ENCODE measurements at regions of chr3 and their contacts with region 1.

Region 1: DNA sequence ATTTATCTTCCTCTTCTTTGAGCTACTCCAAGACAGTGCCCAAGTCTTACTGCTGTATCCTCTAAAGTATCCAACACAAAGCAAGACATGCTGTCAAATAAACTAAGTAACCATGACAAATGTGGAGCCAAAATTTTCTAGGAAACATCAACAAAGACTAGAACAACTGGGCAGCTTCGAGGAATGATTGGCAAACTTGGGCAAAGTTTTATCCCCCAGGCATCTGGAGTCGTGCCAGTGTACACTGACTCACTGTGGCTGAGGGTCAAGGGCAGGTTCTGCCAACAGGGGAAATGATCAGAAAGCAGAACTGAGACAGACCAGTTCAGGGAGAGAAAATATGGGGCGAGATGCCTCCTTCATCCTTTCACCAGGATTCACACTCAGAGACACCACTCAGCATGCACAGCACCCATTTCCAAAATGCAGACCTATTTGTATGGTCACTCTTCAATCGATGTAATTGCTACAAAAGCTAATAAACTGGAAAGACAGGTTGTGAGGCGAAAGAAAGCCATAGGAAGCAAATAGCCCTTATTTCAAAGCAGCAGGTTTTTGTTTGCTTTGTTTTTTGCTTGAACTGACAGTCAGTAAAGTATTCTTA is 65.7 kb downstream of the MB21D2 start:
- DNase-seq: peak; percentile 99
- ATAC-seq: peak; percentile 62
- H3K4me3 ChIP-seq: peak overlapping the region; percentile 27; the same call in 1 of the 2 replicates
- H3K27ac ChIP-seq: peak overlapping the region; percentile 75
- H3K4me1 ChIP-seq: peaks cover 54% of the 10 kb centered on the region
- H3K27me3 ChIP-seq: no peaks in the 10 kb centered on the region
- CTCF ChIP-seq: no peak

Region 2: DNA sequence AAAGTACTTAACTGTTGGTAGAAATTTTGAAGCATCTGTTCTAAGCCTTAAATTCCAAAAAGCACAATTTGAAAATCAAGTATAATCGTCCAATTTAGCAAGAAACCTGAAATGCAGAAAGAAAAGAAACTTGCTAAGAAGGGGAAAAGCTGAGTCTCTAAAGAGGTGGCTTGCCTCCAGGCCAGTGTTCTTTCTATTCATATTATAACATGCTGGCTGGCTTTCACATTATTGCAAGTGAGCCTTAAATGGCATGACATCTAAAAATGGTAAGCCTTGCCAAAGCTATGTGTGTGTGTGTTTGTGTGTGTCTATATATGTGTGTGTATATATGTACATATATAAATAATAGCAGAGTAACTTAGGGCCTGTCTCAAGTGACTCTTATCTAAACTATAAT is 214.1 kb before region 1 on chr3:
- CTCF ChIA-PET with region 1: no interaction called
- POLR2A ChIA-PET with region 1: no interaction called
- intact Hi-C with region 1: no loop called
- DNase-seq: no peak
- ATAC-seq: no peak
- H3K4me3 ChIP-seq: no peak overlapping the region
- H3K27ac ChIP-seq: no peak overlapping the region
- H3K4me1 ChIP-seq: no peaks in the 10 kb centered on the region
- H3K27me3 ChIP-seq: peaks cover 75% of the 10 kb centered on the region
- CTCF ChIP-seq: no peak

Region 3: DNA sequence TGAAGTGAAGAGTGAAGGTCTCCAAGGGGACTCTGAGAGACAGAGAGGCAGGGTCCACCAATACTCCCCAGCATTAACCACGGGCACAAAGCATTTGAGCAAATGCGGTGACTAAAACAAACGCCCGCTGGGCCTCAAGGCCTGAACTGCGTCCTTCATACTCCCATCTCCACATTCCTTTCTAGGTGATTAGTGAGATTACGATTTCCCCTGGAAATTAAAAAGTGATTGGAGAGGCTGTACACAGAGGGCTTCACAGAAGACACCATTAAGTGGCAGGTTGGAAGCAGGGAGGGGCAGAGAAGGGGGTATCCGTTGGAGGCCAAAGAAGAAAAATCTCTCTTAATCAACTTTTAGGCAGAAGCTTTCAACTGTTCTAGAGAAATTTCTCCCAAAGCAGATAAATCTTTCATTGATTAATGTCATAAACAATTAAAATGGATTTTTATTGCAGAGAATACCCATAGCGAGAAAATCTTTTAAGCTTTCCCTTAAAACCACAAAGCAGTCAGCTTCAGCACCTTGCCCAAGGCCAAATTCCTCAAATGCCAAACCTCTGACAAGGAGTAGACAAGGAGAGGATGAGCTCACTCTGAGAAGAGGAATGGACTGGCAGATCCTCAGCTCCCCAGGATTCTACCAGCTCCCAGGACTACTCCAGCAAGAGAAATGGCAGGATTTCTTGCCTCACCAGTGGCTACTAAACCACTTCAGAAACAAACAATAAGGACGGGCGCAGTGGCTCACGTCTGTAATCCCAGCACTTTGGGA is 27.6 kb after region 1 on chr3:
- CTCF ChIA-PET with region 1: no interaction called
- POLR2A ChIA-PET with region 1: no interaction called
- intact Hi-C with region 1: loop called (anchors 1 kb)
- DNase-seq: peak; percentile 99
- ATAC-seq: peak; percentile 86
- H3K4me3 ChIP-seq: peak overlapping the region; percentile 54
- H3K27ac ChIP-seq: no peak overlapping the region
- H3K4me1 ChIP-seq: peaks cover 68% of the 10 kb centered on the region
- H3K27me3 ChIP-seq: no peaks in the 10 kb centered on the region
- CTCF ChIP-seq: no peak

Region 4: DNA sequence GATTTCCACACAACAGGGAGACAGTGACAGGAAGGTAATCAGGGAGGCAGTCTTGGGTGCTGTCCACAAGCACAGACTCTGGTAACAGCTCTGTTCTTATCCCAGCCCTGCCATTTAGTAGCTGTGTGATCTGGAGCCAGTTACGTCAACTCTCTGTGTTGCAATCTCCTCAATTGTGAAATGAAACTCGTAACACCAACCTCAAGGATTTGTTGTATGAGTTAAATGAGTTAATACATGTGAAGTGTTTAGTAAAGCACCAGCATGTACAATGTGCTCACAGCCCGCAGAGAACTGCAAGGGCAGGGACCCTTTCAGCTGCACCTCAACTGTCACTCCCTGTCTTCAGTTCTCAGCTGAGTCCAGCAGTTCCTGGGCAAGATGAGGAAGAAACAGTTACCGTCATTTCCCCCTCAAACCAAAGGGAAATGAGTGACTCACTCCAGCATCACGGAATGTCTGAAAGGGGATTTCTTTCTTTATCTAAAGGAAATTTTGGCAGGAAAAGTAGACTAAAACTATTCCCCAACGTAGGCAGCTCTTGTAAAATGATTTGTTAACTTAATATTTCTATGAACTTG is 105.6 kb after region 1 on chr3:
- CTCF ChIA-PET with region 1: no interaction called
- POLR2A ChIA-PET with region 1: no interaction called
- intact Hi-C with region 1: no loop called
- DNase-seq: peak; percentile 74
- ATAC-seq: peak; percentile 92
- H3K4me3 ChIP-seq: no peak overlapping the region
- H3K27ac ChIP-seq: peak overlapping the region; percentile 34
- H3K4me1 ChIP-seq: peaks cover 17% of the 10 kb centered on the region
- H3K27me3 ChIP-seq: no peaks in the 10 kb centered on the region
- CTCF ChIP-seq: no peak

Measured in PC-3 (cell line).